ENCODE measurements at regions of chr4 and their contacts with region 1.

Region 1: DNA sequence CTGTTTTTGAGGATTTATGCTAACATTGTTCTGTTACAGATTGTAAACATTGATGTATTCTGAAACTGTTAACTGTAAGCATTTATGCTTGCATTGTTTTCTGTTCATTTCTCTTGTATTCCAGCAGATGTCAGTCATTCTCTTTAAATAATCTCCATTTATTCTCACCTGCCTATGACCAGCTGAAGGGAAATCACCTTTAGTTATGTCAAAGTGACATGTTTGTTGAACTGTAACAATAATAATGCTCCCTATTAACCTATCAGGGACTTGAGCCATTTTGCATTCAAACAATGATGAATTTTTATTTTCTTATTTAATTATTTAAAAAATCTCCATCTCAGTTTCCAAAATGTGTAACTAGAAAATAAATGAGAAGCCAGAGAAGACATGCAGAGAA is 58.0 kb downstream of the SPCS3 start:
- DNase-seq: peak; percentile 6
- H3K4me3 ChIP-seq: no peak overlapping the region
- H3K27ac ChIP-seq: no peak overlapping the region
- H3K4me1 ChIP-seq: no peaks in the 10 kb centered on the region
- H3K27me3 ChIP-seq: peaks cover 9% of the 10 kb centered on the region
- CTCF ChIP-seq: peak; percentile 52

Region 2: GRCh38 chr4:176789955-176790354 is 412.2 kb after region 1 on chr4:
- CTCF ChIA-PET with region 1: no interaction called
- POLR2A ChIA-PET with region 1: no interaction called
- intact Hi-C with region 1: loop called (anchors 5 kb)
- DNase-seq: peak; percentile 72
- H3K4me3 ChIP-seq: no peak overlapping the region
- H3K27ac ChIP-seq: no peak overlapping the region
- H3K4me1 ChIP-seq: no peaks in the 10 kb centered on the region
- H3K27me3 ChIP-seq: peaks cover 76% of the 10 kb centered on the region
- CTCF ChIP-seq: peak; percentile 70

Region 3: GRCh38 chr4:177250056-177250696 is 872.4 kb after region 1 on chr4:
- CTCF ChIA-PET with region 1: no interaction called
- POLR2A ChIA-PET with region 1: no interaction called
- intact Hi-C with region 1: loop called (anchors 10 kb)
- DNase-seq: peak; percentile 74
- H3K4me3 ChIP-seq: no peak overlapping the region
- H3K27ac ChIP-seq: no peak overlapping the region
- H3K4me1 ChIP-seq: no peaks in the 10 kb centered on the region
- H3K27me3 ChIP-seq: peaks cover 16% of the 10 kb centered on the region
- CTCF ChIP-seq: peak; percentile 99

Measured in A673 (cell line).